H1 (cell line): ENCODE measurements at regions of chr12 and their contacts with region 1.

Region 1: DNA sequence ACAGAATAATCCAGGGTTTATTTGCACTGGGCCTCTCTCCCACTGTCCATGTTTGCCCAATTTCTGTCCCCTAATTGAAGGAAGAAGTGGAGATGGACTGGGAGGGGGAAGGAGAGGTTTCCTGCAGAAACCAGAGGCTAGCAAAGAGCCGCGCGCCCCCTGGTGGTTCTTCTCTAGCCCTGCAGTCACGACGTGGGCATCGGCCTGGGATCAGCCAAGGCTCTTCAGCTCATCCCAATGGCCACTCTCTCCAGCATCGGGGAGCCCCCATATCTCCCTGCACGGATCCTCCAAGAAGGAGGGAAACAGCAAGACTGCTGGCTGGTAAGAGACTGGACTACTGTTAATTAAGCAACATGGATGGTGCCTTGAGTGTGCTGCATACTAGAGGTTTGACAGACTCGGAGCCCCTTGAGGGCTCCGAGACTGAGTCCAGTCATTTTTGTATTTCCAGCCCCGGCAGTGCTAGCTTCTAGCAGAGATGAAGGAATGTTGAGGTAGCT is 18.7 kb downstream of the ZBTB39 start:
- DNase-seq: peak; percentile 72 to 94
- H3K4me3 ChIP-seq: peak overlapping the region in 1 of 4 experiments; percentile 15; a peak in 1 of 8 replicates
- H3K27ac ChIP-seq: no peak overlapping the region
- H3K4me1 ChIP-seq: peaks cover 0 to 3% (median under 1%) of the 10 kb centered on the region in 4 experiments; a peak in 2 of 7 replicates
- H3K27me3 ChIP-seq: no peaks in the 10 kb centered on the region
- CTCF ChIP-seq: peak; percentile 92 to 97 (median 96)
- EP300 ChIP-seq: no peak
- POLR2A ChIP-seq: no peak
- RAD21 ChIP-seq: peak; percentile 95

Region 2: DNA sequence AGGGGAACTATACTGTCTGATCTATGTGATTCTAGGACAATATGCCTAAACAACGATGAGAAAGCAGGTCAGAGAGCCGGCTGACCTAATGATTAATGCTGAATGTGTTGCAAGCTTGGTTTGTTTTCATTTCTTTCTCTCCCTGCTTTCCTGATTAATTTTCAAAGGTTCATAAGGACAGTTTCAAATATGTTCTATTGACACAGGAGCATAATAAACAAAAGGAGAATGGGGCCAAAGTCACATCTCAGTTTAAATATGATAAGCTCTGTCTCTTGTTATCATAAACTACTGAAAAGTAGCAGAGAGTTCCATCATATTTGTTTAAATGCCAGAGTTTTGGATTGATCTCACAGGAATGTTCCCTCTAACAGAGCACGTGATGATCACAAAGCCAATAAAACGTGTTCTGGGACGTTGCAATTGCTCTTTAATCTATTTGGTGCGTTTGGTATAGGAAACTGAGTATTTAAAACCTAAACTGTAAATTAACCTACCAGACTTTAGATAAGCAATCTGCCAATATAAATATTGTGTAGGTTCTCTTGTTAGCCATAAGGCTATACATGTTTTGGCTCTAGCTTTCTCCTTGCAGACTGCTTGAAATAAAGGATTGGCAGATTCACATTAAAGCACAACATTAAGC is 228.2 kb before region 1 on chr12:
- CTCF ChIA-PET with region 1: interaction called, 40 read pairs
- POLR2A ChIA-PET with region 1: interaction called, 5 read pairs
- DNase-seq: no peak
- H3K4me3 ChIP-seq: no peak overlapping the region
- H3K27ac ChIP-seq: no peak overlapping the region
- H3K4me1 ChIP-seq: no peaks in the 10 kb centered on the region
- H3K27me3 ChIP-seq: no peaks in the 10 kb centered on the region
- CTCF ChIP-seq: no peak
- EP300 ChIP-seq: no peak
- POLR2A ChIP-seq: no peak
- RAD21 ChIP-seq: no peak

Region 3: GRCh38 chr12:56839915-56840325 is 147.7 kb before region 1 on chr12:
- CTCF ChIA-PET with region 1: interaction called, 56 read pairs
- POLR2A ChIA-PET with region 1: interaction called, 3 read pairs
- DNase-seq: peak; percentile 51 to 72
- H3K4me3 ChIP-seq: no peak overlapping the region
- H3K27ac ChIP-seq: no peak overlapping the region
- H3K4me1 ChIP-seq: no peaks in the 10 kb centered on the region
- H3K27me3 ChIP-seq: no peaks in the 10 kb centered on the region
- CTCF ChIP-seq: peak; percentile 86 to 96 (median 94)
- EP300 ChIP-seq: no peak
- POLR2A ChIP-seq: no peak
- RAD21 ChIP-seq: peak; percentile 96 to 98

Region 4: GRCh38 chr12:56928262-56928661 is 59.3 kb before region 1 on chr12:
- CTCF ChIA-PET with region 1: interaction called, 18 read pairs
- POLR2A ChIA-PET with region 1: no interaction called
- DNase-seq: no peak
- H3K4me3 ChIP-seq: no peak overlapping the region
- H3K27ac ChIP-seq: no peak overlapping the region
- H3K4me1 ChIP-seq: peaks cover 0 to 9% (median 3%) of the 10 kb centered on the region in 4 experiments; a peak in 6 of 7 replicates
- H3K27me3 ChIP-seq: no peaks in the 10 kb centered on the region
- CTCF ChIP-seq: no peak
- EP300 ChIP-seq: no peak
- POLR2A ChIP-seq: no peak
- RAD21 ChIP-seq: no peak

Region 5: GRCh38 chr12:57005980-57006808 is 18.6 kb after region 1 on chr12 and contains the start of gene ZBTB39:
- CTCF ChIA-PET with region 1: interaction called, 59 read pairs
- POLR2A ChIA-PET with region 1: interaction called, 13 read pairs
- DNase-seq: peak in 1 of 2 experiments; percentile 81
- H3K4me3 ChIP-seq: peak within 1 kb of the TSS; percentile 73 to 96 (median 82)
- H3K27ac ChIP-seq: peak within 1 kb of the TSS; percentile 60; the same call in 1 of the 2 replicates
- H3K4me1 ChIP-seq: peaks cover 2 to 14% (median 8%) of the 10 kb centered on the region in 4 experiments; a peak in 6 of 7 replicates
- H3K27me3 ChIP-seq: no peaks in the 10 kb centered on the region
- CTCF ChIP-seq: peak; percentile 35 to 88 (median 62)
- EP300 ChIP-seq: no peak
- POLR2A ChIP-seq: peak; percentile 56 to 69; a peak in 2 of 3 replicates
- RAD21 ChIP-seq: 0 out of 4 replicates have a peak, but pooled peaks of 1 of the 2 experiments have one; percentile 5
- total RNA-seq, gene ZBTB39: 24.5 and 25.0 TPM in 2 replicates